ENCODE measurements at regions of chr10 and their contacts with region 1.

Region 1: GRCh38 chr10:9198611-9199010 is 1144.1 kb downstream of the GATA3 start:
- DNase-seq: no peak
- ATAC-seq: no peak
- H3K4me3 ChIP-seq: no peak overlapping the region
- H3K27ac ChIP-seq: no peak overlapping the region
- H3K4me1 ChIP-seq: no peaks in the 10 kb centered on the region
- H3K27me3 ChIP-seq: no peaks in the 10 kb centered on the region
- CTCF ChIP-seq: no peak
- EP300 ChIP-seq: no peak
- POLR2A ChIP-seq: no peak
- RAD21 ChIP-seq: no peak

Region 2: DNA sequence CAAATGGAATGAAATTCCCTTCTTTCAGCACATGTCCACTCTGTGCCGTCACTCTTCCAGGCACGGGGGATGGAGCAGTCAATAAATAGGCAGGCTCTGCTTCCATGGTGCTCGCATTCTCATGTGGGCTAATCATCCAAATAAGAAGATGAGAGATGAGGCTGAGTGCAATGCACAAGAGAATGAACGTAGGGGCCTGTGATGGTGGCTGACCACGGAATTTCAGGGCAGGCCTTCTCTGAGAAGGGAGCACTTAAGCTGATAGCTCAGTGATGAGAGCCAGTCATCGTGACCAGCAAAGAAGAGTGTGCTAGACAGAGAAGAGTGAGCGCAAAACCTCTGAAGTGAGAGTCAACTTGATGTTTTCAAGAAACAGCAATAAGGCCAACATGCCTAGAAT is 1332.4 kb before region 1 on chr10:
- CTCF ChIA-PET with region 1: no interaction called
- POLR2A ChIA-PET with region 1: no interaction called
- in situ Hi-C with region 1: loop called (anchors 10 kb)
- intact Hi-C with region 1: no loop called
- DNase-seq: no peak
- ATAC-seq: no peak
- H3K4me3 ChIP-seq: no peak overlapping the region
- H3K27ac ChIP-seq: no peak overlapping the region
- H3K4me1 ChIP-seq: no peaks in the 10 kb centered on the region; a peak in 1 of 5 replicates
- H3K27me3 ChIP-seq: no peaks in the 10 kb centered on the region
- CTCF ChIP-seq: no peak
- EP300 ChIP-seq: no peak
- POLR2A ChIP-seq: no peak
- RAD21 ChIP-seq: no peak